MCF 10A (cell line): ENCODE measurements at regions of chr2 and their contacts with region 1.

Region 1: DNA sequence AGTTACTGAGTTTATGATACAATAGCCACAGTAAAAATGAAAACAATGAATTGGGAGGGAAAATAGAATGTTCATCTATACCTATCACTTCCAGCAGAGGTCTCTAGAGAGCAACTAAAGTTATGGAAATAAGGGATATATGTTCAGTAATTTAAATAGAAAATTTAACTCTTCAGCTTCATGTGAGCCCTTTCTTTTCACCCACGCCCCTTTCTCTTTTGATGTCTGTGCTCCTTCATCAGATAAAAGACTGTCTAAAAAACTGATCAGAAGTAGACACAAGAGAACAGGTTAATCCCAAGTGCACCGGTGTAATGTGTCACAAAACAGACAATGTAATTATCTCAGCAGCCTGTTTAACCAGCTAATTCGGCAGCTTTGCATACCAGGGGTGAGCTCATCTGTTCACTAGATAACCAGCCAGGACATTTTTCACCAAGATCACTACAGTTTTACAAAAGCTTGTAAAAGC is 238.5 kb upstream of the ERBB4 start:
- DNase-seq: peak; percentile 61
- H3K4me3 Mint-ChIP-seq: no peak overlapping the region
- H3K27ac Mint-ChIP-seq: no peak overlapping the region
- H3K4me1 Mint-ChIP-seq: no peaks in the 10 kb centered on the region
- H3K27me3 Mint-ChIP-seq: no peaks in the 10 kb centered on the region
- CTCF ChIP-seq: peak; percentile 53

Region 2: GRCh38 chr2:212465456-212465855 is 311.6 kb before region 1 on chr2:
- CTCF ChIA-PET with region 1: no interaction called
- POLR2A ChIA-PET with region 1: no interaction called
- intact Hi-C with region 1: no loop called
- DNase-seq: no peak
- H3K4me3 Mint-ChIP-seq: no peak overlapping the region
- H3K27ac Mint-ChIP-seq: no peak overlapping the region
- H3K4me1 Mint-ChIP-seq: no peaks in the 10 kb centered on the region
- H3K27me3 Mint-ChIP-seq: peaks cover 44% of the 10 kb centered on the region
- CTCF ChIP-seq: no peak

Region 3: DNA sequence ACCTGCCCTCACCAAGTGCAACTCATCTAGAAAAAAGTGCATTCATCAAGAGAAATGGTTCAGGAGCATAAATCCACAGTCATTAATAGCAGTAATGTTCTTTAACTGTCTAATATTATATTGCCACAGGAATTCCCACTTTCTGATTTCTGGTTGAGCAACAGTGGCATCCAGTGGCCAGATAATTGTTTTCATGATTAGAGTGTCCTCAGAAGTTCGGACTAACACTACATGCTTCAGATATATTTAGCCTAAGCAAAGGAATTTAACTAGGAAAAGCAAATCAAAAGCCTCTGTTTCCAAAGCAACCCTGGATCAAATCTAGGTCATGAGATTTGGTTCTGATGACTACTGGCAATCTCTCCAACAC is 228.6 kb before region 1 on chr2:
- CTCF ChIA-PET with region 1: no interaction called
- POLR2A ChIA-PET with region 1: no interaction called
- intact Hi-C with region 1: no loop called
- DNase-seq: peak; percentile 38
- H3K4me3 Mint-ChIP-seq: no peak overlapping the region
- H3K27ac Mint-ChIP-seq: no peak overlapping the region
- H3K4me1 Mint-ChIP-seq: no peaks in the 10 kb centered on the region
- H3K27me3 Mint-ChIP-seq: peaks cover 55% of the 10 kb centered on the region
- CTCF ChIP-seq: peak; percentile 32

Region 4: DNA sequence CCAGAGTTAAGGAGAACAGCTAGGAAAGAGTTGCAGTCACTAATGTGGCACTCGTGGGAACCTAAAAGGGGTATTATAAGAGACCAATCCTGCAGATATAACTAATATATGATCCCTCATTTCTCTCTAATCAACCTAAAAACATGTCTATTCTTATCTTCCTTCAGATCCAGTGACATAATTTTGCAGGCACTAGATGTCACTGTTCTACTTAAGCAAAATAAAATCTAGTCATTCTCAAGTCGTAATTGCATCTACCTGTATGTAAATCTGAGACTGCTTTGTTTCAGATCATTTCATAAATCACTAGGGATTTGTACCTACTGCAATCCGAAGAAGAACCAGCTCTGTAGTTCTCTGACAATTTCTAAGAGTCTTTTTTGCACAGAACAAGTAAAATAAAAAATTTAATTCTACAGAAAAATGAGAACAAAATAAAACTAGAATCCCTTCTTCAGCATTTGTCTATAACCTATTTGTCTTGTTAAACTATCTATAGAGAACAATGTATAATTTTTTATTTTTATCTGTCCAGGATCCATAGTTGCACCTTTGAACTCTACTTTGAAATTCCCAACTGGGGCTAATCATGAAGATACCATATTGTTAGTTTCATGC is 181.9 kb before region 1 on chr2:
- CTCF ChIA-PET with region 1: interaction called, 7 read pairs
- POLR2A ChIA-PET with region 1: no interaction called
- intact Hi-C with region 1: loop called (anchors 2 kb)
- DNase-seq: peak; percentile 49
- H3K4me3 Mint-ChIP-seq: no peak overlapping the region
- H3K27ac Mint-ChIP-seq: no peak overlapping the region
- H3K4me1 Mint-ChIP-seq: peaks cover 7% of the 10 kb centered on the region
- H3K27me3 Mint-ChIP-seq: no peaks in the 10 kb centered on the region
- CTCF ChIP-seq: peak; percentile 48

Region 5: DNA sequence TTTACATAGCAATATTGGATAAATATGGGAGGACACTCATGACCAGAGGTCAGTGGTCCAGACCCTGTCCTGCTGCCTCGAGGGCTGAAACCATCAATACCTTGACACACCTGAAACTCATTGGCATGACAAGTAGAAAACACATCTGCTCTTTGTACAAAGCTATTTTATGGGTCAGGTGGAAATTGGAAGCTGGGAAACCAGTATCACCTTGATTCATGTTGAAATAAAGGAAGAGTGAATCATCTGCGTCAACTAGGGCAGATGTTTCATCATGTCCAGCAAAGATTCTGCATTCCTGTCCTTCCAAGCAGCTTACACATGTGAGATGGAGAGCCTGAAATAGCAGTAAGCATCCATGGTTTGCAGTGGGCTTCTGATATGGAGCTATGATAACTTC is 158.4 kb before region 1 on chr2:
- CTCF ChIA-PET with region 1: no interaction called
- POLR2A ChIA-PET with region 1: no interaction called
- intact Hi-C with region 1: no loop called
- DNase-seq: peak; percentile 86
- H3K4me3 Mint-ChIP-seq: no peak overlapping the region
- H3K27ac Mint-ChIP-seq: no peak overlapping the region
- H3K4me1 Mint-ChIP-seq: peaks cover 16% of the 10 kb centered on the region
- H3K27me3 Mint-ChIP-seq: no peaks in the 10 kb centered on the region
- CTCF ChIP-seq: no peak

Region 6: GRCh38 chr2:212686285-212686895 is 90.7 kb before region 1 on chr2:
- CTCF ChIA-PET with region 1: interaction called, 5 read pairs
- POLR2A ChIA-PET with region 1: no interaction called
- intact Hi-C with region 1: loop called (anchors 1 kb)
- DNase-seq: peak; percentile 75
- H3K4me3 Mint-ChIP-seq: no peak overlapping the region
- H3K27ac Mint-ChIP-seq: no peak overlapping the region
- H3K4me1 Mint-ChIP-seq: peaks cover 6% of the 10 kb centered on the region
- H3K27me3 Mint-ChIP-seq: no peaks in the 10 kb centered on the region
- CTCF ChIP-seq: peak; percentile 91

Region 7: DNA sequence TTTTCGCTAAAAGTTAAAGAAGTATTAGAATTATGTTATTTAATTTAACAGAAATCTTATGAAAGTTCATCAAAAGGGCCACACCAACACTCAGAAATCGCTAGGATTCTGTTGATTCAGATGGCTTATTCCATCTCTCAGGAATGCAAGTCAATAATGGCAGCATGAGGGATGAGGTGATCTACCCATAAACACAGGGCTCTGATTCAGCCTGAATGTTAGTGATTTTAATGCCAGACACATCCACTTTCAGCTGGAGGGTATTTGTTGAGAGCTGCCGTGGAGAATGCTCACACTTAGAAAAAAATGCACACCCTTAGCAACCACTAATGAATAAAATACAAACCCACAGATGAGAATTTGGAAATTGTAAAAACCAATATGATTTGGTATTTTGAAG is 65.2 kb before region 1 on chr2:
- CTCF ChIA-PET with region 1: no interaction called
- POLR2A ChIA-PET with region 1: no interaction called
- intact Hi-C with region 1: no loop called
- DNase-seq: peak; percentile 8
- H3K4me3 Mint-ChIP-seq: no peak overlapping the region
- H3K27ac Mint-ChIP-seq: no peak overlapping the region
- H3K4me1 Mint-ChIP-seq: peaks cover 15% of the 10 kb centered on the region
- H3K27me3 Mint-ChIP-seq: no peaks in the 10 kb centered on the region
- CTCF ChIP-seq: no peak

Region 8: GRCh38 chr2:212892193-212892592 is 115.1 kb after region 1 on chr2:
- CTCF ChIA-PET with region 1: interaction called, 41 read pairs
- POLR2A ChIA-PET with region 1: no interaction called
- intact Hi-C with region 1: loop called (anchors 2 kb)
- DNase-seq: peak; percentile 58
- H3K4me3 Mint-ChIP-seq: no peak overlapping the region
- H3K27ac Mint-ChIP-seq: no peak overlapping the region
- H3K4me1 Mint-ChIP-seq: peaks cover 6% of the 10 kb centered on the region
- H3K27me3 Mint-ChIP-seq: no peaks in the 10 kb centered on the region
- CTCF ChIP-seq: peak; percentile 37

Region 9: GRCh38 chr2:213145715-213146242 is 368.7 kb after region 1 on chr2:
- CTCF ChIA-PET with region 1: interaction called, 190 read pairs
- POLR2A ChIA-PET with region 1: interaction called, 15 read pairs
- intact Hi-C with region 1: no loop called
- DNase-seq: no peak
- H3K4me3 Mint-ChIP-seq: peak overlapping the region; percentile 31
- H3K27ac Mint-ChIP-seq: peak overlapping the region; percentile 49
- H3K4me1 Mint-ChIP-seq: peaks cover 30% of the 10 kb centered on the region
- H3K27me3 Mint-ChIP-seq: no peaks in the 10 kb centered on the region
- CTCF ChIP-seq: no peak